ENCODE measurements at regions of chr3 and their contacts with region 1.

Region 1: GRCh38 chr3:112734718-112735350 is 93.9 kb upstream of the CCDC80 start:
- DNase-seq: peak; percentile 82 to 89 (median 87)
- H3K4me3 ChIP-seq: no peak overlapping the region
- H3K27ac ChIP-seq: no peak overlapping the region
- H3K4me1 ChIP-seq: peaks cover 7 to 12% (median 9%) of the 10 kb centered on the region in 4 experiments
- H3K27me3 ChIP-seq: peaks cover 0 to 2% (median 0%) of the 10 kb centered on the region in 5 experiments

Region 2: GRCh38 chr3:112582244-112582874 is 152.5 kb before region 1 on chr3:
- CTCF ChIA-PET with region 1: interaction called, 17 read pairs
- POLR2A ChIA-PET with region 1: no interaction called
- DNase-seq: peak; percentile 59 to 82 (median 77)
- H3K4me3 ChIP-seq: no peak overlapping the region
- H3K27ac ChIP-seq: no peak overlapping the region
- H3K4me1 ChIP-seq: peaks cover 0 to 13% (median 5%) of the 10 kb centered on the region in 4 experiments
- H3K27me3 ChIP-seq: no peaks in the 10 kb centered on the region

Region 3: GRCh38 chr3:112746675-112747280 is 11.9 kb after region 1 on chr3:
- CTCF ChIA-PET with region 1: interaction called, 18 read pairs
- POLR2A ChIA-PET with region 1: no interaction called
- DNase-seq: no peak
- H3K4me3 ChIP-seq: no peak overlapping the region
- H3K27ac ChIP-seq: no peak overlapping the region
- H3K4me1 ChIP-seq: no peaks in the 10 kb centered on the region
- H3K27me3 ChIP-seq: peaks cover 0 to 1% (median 0%) of the 10 kb centered on the region in 5 experiments

Region 4: DNA sequence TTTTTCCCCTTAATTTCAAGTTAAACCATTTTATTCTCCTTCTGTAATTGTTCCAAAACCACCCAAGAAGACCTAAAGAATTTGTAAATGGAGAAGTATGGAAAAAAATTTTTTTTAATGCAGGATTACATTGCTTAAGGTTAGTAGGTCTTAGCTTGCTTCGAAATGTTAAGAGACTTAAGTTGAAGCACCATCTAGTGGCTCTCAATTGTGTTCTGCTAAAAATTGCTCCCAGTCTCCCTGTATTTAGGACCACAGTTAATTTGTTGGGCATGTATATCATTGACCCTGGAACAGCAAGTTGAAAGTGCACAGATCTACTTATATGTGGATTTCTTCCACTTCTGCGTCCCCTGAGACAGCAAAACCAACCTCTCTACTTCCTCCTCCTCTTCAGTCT is 79.4 kb after region 1 on chr3:
- CTCF ChIA-PET with region 1: interaction called, 24 read pairs
- POLR2A ChIA-PET with region 1: no interaction called
- DNase-seq: peak; percentile 15 to 32 (median 27)
- H3K4me3 ChIP-seq: no peak overlapping the region
- H3K27ac ChIP-seq: no peak overlapping the region
- H3K4me1 ChIP-seq: peaks cover 0 to 45% (median 15%) of the 10 kb centered on the region in 4 experiments
- H3K27me3 ChIP-seq: no peaks in the 10 kb centered on the region

Region 5: GRCh38 chr3:112979240-112979832 is 244.5 kb after region 1 on chr3:
- CTCF ChIA-PET with region 1: interaction called, 127 read pairs
- POLR2A ChIA-PET with region 1: no interaction called
- DNase-seq: peak; percentile 45 to 76 (median 67)
- H3K4me3 ChIP-seq: no peak overlapping the region
- H3K27ac ChIP-seq: no peak overlapping the region
- H3K4me1 ChIP-seq: peaks cover 12 to 34% (median 20%) of the 10 kb centered on the region in 4 experiments
- H3K27me3 ChIP-seq: no peaks in the 10 kb centered on the region

Region 6: GRCh38 chr3:113897373-113897777 is 1162.5 kb after region 1 on chr3:
- CTCF ChIA-PET with region 1: no interaction called
- POLR2A ChIA-PET with region 1: no interaction called
- DNase-seq: peak in 2 of 3 donors; percentile 6 to 14
- H3K4me3 ChIP-seq: peak overlapping the region in 3 of 7 experiments; percentile 15 to 63 (median 30)
- H3K27ac ChIP-seq: no peak overlapping the region
- H3K4me1 ChIP-seq: peaks cover 0 to 12% (median 5%) of the 10 kb centered on the region in 4 experiments
- H3K27me3 ChIP-seq: no peaks in the 10 kb centered on the region